CD4-positive, alpha-beta memory T cell (primary cell): ENCODE measurements at regions of chr5 and their contacts with region 1.

Region 1: GRCh38 chr5:123511648-123512605 is at the start of gene CSNK1G3:
- DNase-seq: peak; percentile 91 to 95 (median 92)
- H3K4me3 ChIP-seq: peak within 1 kb of the TSS; percentile 57 to 75
- H3K4me3 Mint-ChIP-seq: peak within 1 kb of the TSS; percentile 94 to 99 (median 98)
- H3K27ac ChIP-seq: peak within 1 kb of the TSS; percentile 71
- H3K27ac Mint-ChIP-seq: peak within 1 kb of the TSS; percentile 95 to 99 (median 98)
- H3K4me1 ChIP-seq: peaks cover 44% of the 10 kb centered on the region
- H3K4me1 Mint-ChIP-seq: peaks cover 25 to 53% (median 35%) of the 10 kb centered on the region in 4 donors
- H3K27me3 ChIP-seq: no peaks in the 10 kb centered on the region
- H3K27me3 Mint-ChIP-seq: no peaks in the 10 kb centered on the region
- total RNA-seq, gene CSNK1G3: 86.5 to 93.0 TPM

Region 2: DNA sequence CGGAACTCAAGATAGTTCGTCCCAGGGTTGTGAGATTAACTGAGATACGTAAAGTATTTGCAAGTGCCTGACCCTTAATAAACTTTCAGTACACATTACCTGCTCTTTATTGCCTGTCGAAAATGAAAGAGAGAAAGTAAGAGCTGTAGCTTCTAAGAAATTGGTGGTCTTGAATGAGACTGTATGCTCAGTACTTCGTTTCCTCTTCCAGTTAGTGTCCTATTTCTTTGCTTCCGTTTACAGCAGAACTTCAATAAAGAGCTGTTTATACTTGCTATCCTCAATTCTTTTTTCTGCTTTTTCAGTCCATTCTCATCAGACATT is 1549.6 kb before region 1 on chr5:
- CTCF ChIA-PET with region 1: no interaction called
- POLR2A ChIA-PET with region 1: no interaction called
- intact Hi-C with region 1: loop called (anchors 5 kb)
- DNase-seq: peak in 1 of 5 donors; percentile 23
- H3K4me3 ChIP-seq: peak overlapping the region; percentile 85 to 89
- H3K4me3 Mint-ChIP-seq: peak overlapping the region; percentile 92 to 100 (median 98)
- H3K27ac ChIP-seq: peak overlapping the region; percentile 62
- H3K27ac Mint-ChIP-seq: peak overlapping the region; percentile 92 to 100 (median 98)
- H3K4me1 ChIP-seq: peaks cover 19% of the 10 kb centered on the region
- H3K4me1 Mint-ChIP-seq: peaks cover 26 to 50% (median 42%) of the 10 kb centered on the region in 4 donors
- H3K27me3 ChIP-seq: no peaks in the 10 kb centered on the region
- H3K27me3 Mint-ChIP-seq: peaks cover under 1 to 11% of the 10 kb centered on the region in 2 donors

Region 3: GRCh38 chr5:122774861-122775549 is 736.9 kb before region 1 on chr5 and contains the start of gene SNX2:
- CTCF ChIA-PET with region 1: no interaction called
- POLR2A ChIA-PET with region 1: no interaction called
- intact Hi-C with region 1: loop called (anchors 1 kb)
- DNase-seq: peak; percentile 85 to 89 (median 88)
- H3K4me3 ChIP-seq: peak within 1 kb of the TSS; percentile 71 to 89
- H3K4me3 Mint-ChIP-seq: peak within 1 kb of the TSS; percentile 95 to 99 (median 96)
- H3K27ac ChIP-seq: peak within 1 kb of the TSS; percentile 72
- H3K27ac Mint-ChIP-seq: peak within 1 kb of the TSS; percentile 94 to 97 (median 96)
- H3K4me1 ChIP-seq: peaks cover 39% of the 10 kb centered on the region
- H3K4me1 Mint-ChIP-seq: peaks cover 31 to 53% (median 43%) of the 10 kb centered on the region in 4 donors
- H3K27me3 ChIP-seq: no peaks in the 10 kb centered on the region
- H3K27me3 Mint-ChIP-seq: peaks cover 0 to 3% of the 10 kb centered on the region in 2 donors
- total RNA-seq, gene SNX2: 57.3 to 58.1 TPM

Region 4: GRCh38 chr5:122845229-122846050 is 666.5 kb before region 1 on chr5 and contains the start of gene SNX24:
- CTCF ChIA-PET with region 1: no interaction called
- POLR2A ChIA-PET with region 1: no interaction called
- intact Hi-C with region 1: loop called (anchors 10 kb)
- DNase-seq: peak; percentile 72 to 81 (median 77)
- H3K4me3 ChIP-seq: peak within 1 kb of the TSS; percentile 79 to 96
- H3K4me3 Mint-ChIP-seq: peak within 1 kb of the TSS; percentile 90 to 94 (median 94)
- H3K27ac ChIP-seq: peak within 1 kb of the TSS; percentile 68
- H3K27ac Mint-ChIP-seq: peak within 1 kb of the TSS; percentile 87 to 95 (median 94)
- H3K4me1 ChIP-seq: peaks cover 25% of the 10 kb centered on the region
- H3K4me1 Mint-ChIP-seq: peaks cover 26 to 42% (median 35%) of the 10 kb centered on the region in 4 donors
- H3K27me3 ChIP-seq: no peaks in the 10 kb centered on the region
- H3K27me3 Mint-ChIP-seq: no peaks in the 10 kb centered on the region
- total RNA-seq, gene SNX24: 4.4 to 7.2 TPM

Region 5: DNA sequence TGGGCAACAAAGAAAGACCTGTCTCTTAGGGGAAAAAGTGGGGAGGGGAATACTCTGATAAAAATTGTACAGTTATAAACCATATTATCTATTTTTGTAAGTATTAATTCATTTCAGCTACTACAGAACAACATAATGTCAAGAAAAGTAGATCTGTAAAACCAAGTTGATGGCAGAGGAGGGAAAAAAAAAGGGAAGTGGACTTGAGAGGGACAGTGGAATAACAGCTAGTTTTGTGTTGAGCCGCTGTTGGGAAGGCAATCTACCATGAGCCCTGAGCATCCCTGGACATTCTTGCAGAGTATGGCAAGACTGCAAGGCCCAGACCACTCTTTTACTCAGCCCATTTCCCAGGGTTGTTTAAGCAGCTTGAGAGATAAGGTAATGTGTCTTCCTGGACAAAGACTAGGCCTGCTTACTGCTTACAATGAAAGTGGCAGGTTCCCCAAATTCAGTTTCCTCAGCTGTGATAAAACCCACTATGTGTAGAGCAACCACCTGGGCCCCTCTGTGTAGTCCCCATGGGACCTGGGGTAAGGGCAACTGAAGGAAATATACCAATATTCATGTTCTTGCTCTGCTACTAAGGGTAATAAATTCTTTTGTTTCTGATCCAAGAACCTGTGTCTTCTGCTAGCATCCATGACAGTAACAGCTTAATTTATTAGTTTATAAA is 113.7 kb before region 1 on chr5:
- CTCF ChIA-PET with region 1: no interaction called
- POLR2A ChIA-PET with region 1: no interaction called
- intact Hi-C with region 1: no loop called
- DNase-seq: no peak
- H3K4me3 ChIP-seq: no peak overlapping the region
- H3K4me3 Mint-ChIP-seq: no peak overlapping the region
- H3K27ac ChIP-seq: no peak overlapping the region
- H3K27ac Mint-ChIP-seq: no peak overlapping the region
- H3K4me1 ChIP-seq: no peaks in the 10 kb centered on the region
- H3K4me1 Mint-ChIP-seq: peaks cover 0 to 9% (median 2%) of the 10 kb centered on the region in 4 donors
- H3K27me3 ChIP-seq: no peaks in the 10 kb centered on the region
- H3K27me3 Mint-ChIP-seq: no peaks in the 10 kb centered on the region

Region 6: DNA sequence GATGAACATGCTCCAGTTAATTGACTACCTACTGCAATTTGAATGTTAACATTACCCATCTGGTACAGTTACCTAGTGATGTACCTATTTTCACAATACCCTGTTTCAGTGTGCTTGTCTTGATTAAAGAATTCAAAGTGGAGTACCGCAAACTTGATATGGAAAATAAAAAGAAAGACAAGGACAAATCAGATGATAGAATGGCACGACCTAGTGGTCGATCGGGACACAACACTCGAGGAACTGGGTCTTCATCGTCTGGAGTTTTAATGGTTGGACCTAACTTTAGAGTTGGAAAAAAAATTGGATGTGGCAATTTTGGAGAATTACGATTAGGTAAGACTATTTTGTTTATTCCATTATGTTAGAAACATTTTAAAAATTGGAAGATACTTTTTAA is 33.6 kb after region 1 on chr5:
- CTCF ChIA-PET with region 1: interaction called, 8 read pairs
- POLR2A ChIA-PET with region 1: interaction called, 28 read pairs
- intact Hi-C with region 1: loop called (anchors 1 kb)
- DNase-seq: peak in 4 of 5 donors; percentile 10 to 41 (median 22)
- H3K4me3 ChIP-seq: no peak overlapping the region
- H3K4me3 Mint-ChIP-seq: no peak overlapping the region
- H3K27ac ChIP-seq: no peak overlapping the region
- H3K27ac Mint-ChIP-seq: peak overlapping the region in 3 of 7 donors; percentile 8 to 58 (median 32)
- H3K4me1 ChIP-seq: peaks cover 39% of the 10 kb centered on the region
- H3K4me1 Mint-ChIP-seq: peaks cover 39 to 66% (median 52%) of the 10 kb centered on the region in 4 donors
- H3K27me3 ChIP-seq: no peaks in the 10 kb centered on the region
- H3K27me3 Mint-ChIP-seq: no peaks in the 10 kb centered on the region

Region 7: DNA sequence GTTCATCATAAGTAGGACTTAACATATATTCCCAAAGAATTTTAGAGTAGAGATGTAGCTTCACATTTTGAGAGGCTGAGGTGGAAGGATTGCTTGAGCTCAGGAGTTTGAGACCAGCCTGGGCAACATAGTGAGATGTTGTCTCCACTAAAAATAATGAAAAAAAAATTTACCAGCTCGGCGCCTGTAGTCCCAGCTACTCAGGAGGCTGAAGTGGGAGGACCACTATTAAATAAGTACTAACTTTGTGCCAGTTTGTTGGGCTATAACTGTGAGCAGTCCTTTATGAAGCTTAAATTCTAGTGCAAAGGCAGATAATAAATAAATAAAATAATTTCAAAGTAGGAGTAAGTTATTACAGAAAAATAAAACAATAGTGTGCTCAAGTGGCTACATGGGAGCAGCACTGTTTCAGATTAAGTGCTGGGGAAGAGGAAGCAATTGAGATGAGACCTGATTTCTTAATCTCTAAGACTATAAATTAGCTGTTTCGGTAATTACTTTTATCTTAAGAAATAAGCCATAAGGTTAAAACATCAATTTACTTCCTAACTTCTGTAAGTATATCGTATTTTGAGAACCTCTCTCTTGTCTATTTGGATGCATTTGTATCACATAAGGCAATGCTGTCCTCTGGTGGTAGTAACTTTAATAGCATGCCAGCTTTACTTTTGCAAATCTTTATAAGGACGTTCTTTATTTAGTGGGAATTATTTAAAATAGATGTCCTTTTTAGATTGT is 98.9 kb after region 1 on chr5:
- CTCF ChIA-PET with region 1: interaction called, 5 read pairs
- POLR2A ChIA-PET with region 1: interaction called, 3 read pairs
- intact Hi-C with region 1: loop called (anchors 5 kb)
- DNase-seq: peak; percentile 47 to 60 (median 56)
- H3K4me3 ChIP-seq: no peak overlapping the region
- H3K4me3 Mint-ChIP-seq: no peak overlapping the region
- H3K27ac ChIP-seq: no peak overlapping the region
- H3K27ac Mint-ChIP-seq: peak overlapping the region in 4 of 7 donors; percentile 58 to 90 (median 90)
- H3K4me1 ChIP-seq: no peaks in the 10 kb centered on the region
- H3K4me1 Mint-ChIP-seq: peaks cover 0 to 6% (median 2%) of the 10 kb centered on the region in 4 donors
- H3K27me3 ChIP-seq: no peaks in the 10 kb centered on the region
- H3K27me3 Mint-ChIP-seq: no peaks in the 10 kb centered on the region